Activated B cell treated with CpG ODN at 0.5 μM for 24 hours (primary cell): ENCODE measurements at regions of chr20 and their contacts with region 1.

Region 1: DNA sequence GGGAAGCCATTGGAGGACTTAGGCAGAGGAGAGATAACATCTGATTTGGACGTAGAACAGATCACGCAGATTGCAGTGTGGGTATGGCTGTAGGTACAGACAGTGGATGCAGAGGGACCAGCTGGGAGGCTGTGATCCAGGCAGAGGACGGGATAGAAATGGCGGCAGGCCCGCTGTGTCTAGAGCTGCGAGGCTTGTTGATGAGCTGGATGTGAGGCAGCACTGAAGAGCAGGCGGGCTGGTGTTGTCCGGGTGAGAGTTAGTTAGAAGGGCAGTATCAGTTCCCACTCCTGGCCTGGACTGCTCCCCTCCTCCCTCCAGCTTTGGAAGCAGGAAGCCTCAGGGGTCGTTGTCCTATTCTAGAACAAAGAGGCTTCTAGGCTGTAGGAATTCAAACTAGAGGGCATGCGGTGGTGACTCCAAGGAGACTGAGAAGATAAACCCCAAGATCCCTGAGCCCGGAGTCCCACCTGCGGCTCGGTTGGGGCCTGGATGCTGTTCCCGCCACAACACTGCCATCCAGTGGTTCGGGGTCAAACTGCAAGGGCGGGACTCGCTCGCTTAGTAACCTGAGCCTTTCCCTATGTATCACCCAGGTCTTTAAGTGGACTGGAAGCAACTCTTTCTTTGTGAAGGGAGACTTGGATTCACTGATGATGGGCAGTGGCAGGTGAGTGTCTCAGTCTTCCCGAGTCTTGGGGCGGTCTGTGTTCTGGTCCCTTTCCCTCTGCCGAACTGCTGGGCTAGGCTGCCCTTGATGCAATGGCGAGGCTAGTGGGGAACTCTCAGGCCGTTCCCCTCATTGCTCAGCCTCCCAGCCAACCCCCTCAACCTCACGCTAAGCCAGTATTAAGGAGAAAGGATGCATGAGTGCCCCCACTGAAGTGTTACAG is 11.2 kb downstream of the TLDC2 start:
- DNase-seq: peak; percentile 77
- ATAC-seq: peak; percentile 99
- H3K4me3 Mint-ChIP-seq: peak overlapping the region; percentile 59
- H3K27ac Mint-ChIP-seq: no peak overlapping the region
- H3K4me1 Mint-ChIP-seq: peaks cover 7% of the 10 kb centered on the region
- H3K27me3 Mint-ChIP-seq: no peaks in the 10 kb centered on the region
- CTCF ChIP-seq: no peak

Region 2: DNA sequence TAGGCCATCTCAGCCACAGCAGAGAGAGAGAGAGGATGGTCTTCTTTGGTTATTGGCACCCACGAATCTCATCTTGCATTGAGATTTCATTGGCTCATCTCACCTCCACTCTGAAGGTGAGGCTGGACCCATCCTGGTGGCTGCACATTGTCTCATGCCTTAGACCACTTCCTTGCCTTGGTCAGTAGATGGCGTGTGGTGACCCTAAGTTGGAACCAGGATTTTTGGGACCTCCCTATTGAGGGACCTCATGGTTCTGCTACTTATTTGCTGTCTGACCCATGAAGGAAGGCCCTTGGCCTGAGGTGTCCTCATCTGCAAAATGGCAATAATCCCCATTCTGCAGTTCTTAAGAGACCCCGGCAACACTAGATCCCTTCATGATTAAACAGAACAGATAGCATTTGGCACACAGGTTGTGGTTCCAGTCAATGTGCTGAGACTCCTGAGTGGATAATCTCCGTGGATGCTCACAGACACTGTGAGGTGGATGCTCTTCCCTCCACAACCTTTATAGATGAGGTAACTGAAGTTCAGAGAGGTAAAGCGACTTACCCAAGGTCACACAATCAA is 672.3 kb before region 1 on chr20:
- CTCF ChIA-PET with region 1: interaction called, 6 read pairs
- POLR2A ChIA-PET with region 1: no interaction called
- intact Hi-C with region 1: loop called (anchors 1 kb)
- DNase-seq: no peak
- ATAC-seq: peak; percentile 49
- H3K4me3 Mint-ChIP-seq: no peak overlapping the region
- H3K27ac Mint-ChIP-seq: no peak overlapping the region
- H3K4me1 Mint-ChIP-seq: no peaks in the 10 kb centered on the region
- H3K27me3 Mint-ChIP-seq: peaks cover 2% of the 10 kb centered on the region
- CTCF ChIP-seq: peak; percentile 34

Region 3: DNA sequence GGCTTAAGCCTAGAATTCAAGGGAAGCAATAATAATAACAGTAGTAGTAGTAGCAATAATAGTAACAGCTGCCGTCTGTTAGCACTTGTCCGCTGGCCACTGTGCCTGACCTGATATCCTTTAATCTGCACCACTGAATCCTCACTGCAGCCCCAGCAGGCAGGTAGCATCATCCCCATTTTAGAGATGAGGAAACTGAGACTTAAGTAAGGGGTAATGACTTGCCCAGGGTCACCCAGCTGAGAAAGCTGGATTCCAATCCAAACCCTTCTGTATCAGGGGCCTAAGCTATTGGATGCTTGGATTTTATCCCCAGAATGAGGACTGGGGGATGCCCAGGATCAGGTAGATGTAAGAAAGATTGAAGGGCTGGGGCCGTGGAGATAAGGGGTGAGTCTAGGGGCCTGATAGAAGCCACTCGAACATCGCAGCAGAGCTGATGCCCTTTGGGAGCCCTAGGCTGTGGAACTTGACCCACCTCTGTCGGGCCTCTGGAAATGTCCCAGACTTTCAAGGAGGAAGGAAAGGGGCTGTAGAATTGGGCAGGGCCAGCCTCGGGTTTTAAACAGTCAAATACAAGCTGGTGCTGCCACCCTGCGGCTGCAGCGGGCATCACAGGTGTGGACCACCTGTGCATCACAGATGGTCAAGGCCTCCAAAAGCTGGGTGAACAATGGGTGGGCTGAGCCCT is 447.9 kb before region 1 on chr20:
- CTCF ChIA-PET with region 1: no interaction called
- POLR2A ChIA-PET with region 1: no interaction called
- intact Hi-C with region 1: no loop called
- DNase-seq: peak; percentile 58
- ATAC-seq: peak; percentile 48
- H3K4me3 Mint-ChIP-seq: no peak overlapping the region
- H3K27ac Mint-ChIP-seq: no peak overlapping the region
- H3K4me1 Mint-ChIP-seq: peaks cover 10% of the 10 kb centered on the region
- H3K27me3 Mint-ChIP-seq: peaks cover 4% of the 10 kb centered on the region
- CTCF ChIP-seq: no peak

Region 4: GRCh38 chr20:36506253-36506652 is 380.9 kb before region 1 on chr20:
- CTCF ChIA-PET with region 1: no interaction called
- POLR2A ChIA-PET with region 1: no interaction called
- intact Hi-C with region 1: loop called (anchors 1 kb)
- DNase-seq: no peak
- ATAC-seq: peak; percentile 56
- H3K4me3 Mint-ChIP-seq: no peak overlapping the region
- H3K27ac Mint-ChIP-seq: no peak overlapping the region
- H3K4me1 Mint-ChIP-seq: peaks cover 3% of the 10 kb centered on the region
- H3K27me3 Mint-ChIP-seq: no peaks in the 10 kb centered on the region
- CTCF ChIP-seq: no peak

Region 5: GRCh38 chr20:36613974-36614373 is 273.1 kb before region 1 on chr20:
- CTCF ChIA-PET with region 1: interaction called, 5 read pairs
- POLR2A ChIA-PET with region 1: interaction called, 4 read pairs
- intact Hi-C with region 1: loop called (anchors 1 kb)
- DNase-seq: no peak
- ATAC-seq: no peak
- H3K4me3 Mint-ChIP-seq: no peak overlapping the region
- H3K27ac Mint-ChIP-seq: no peak overlapping the region
- H3K4me1 Mint-ChIP-seq: no peaks in the 10 kb centered on the region
- H3K27me3 Mint-ChIP-seq: no peaks in the 10 kb centered on the region
- CTCF ChIP-seq: no peak

Region 6: GRCh38 chr20:36717657-36718056 is 169.4 kb before region 1 on chr20:
- CTCF ChIA-PET with region 1: interaction called, 5 read pairs
- POLR2A ChIA-PET with region 1: no interaction called
- intact Hi-C with region 1: loop called (anchors 2 kb)
- DNase-seq: no peak
- ATAC-seq: no peak
- H3K4me3 Mint-ChIP-seq: no peak overlapping the region
- H3K27ac Mint-ChIP-seq: no peak overlapping the region
- H3K4me1 Mint-ChIP-seq: no peaks in the 10 kb centered on the region
- H3K27me3 Mint-ChIP-seq: no peaks in the 10 kb centered on the region
- CTCF ChIP-seq: no peak

Region 7: DNA sequence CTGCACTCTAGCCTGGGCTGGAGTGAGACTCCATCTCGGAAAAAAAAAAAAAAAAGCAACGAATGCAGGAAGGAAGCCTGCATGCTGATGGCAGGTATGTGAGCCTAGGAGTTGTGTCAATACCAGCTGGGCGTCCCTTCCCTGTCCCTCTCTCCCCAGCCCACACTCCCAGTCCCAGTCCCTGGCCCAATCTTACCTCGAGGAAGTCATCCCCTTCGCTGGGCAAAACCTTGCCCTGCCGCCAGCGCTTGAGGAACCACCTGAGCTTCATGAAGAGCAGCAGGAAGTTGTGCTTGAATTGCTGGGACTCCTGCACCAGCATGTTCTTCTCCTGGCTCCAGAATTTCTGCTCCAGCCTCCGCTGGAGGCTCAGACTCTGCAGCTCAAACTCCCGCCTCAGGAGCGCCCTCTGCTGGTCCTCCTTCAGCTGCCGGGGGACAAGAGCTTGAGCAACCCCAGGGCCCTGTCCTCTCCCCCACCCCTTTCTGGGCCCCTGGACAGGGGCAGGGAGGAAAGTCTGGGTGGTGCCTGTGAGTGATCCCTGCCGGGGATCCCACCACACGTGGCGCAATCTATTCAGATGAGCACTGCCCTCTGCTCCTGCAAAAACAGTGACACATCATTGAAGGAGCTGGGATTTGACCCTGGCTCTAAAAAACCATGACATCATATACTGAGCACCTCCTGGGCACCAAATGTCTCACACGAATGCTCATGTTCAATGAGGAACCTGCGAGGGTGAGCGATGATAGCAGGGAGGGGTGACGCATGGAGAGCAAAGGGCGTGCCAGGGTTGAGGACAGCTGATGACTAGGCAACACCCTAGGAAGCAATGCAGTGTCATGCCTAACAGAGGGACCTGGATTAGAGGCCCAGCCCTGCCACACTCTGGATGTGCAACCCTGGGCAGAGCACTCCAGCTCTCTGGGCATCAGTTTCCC is 78.5 kb before region 1 on chr20:
- CTCF ChIA-PET with region 1: interaction called, 11 read pairs
- POLR2A ChIA-PET with region 1: interaction called, 9 read pairs
- intact Hi-C with region 1: loop called (anchors 2 kb)
- DNase-seq: peak; percentile 62
- ATAC-seq: peak; percentile 71
- H3K4me3 Mint-ChIP-seq: no peak overlapping the region
- H3K27ac Mint-ChIP-seq: peak overlapping the region; percentile 35
- H3K4me1 Mint-ChIP-seq: peaks cover 3% of the 10 kb centered on the region
- H3K27me3 Mint-ChIP-seq: no peaks in the 10 kb centered on the region
- CTCF ChIP-seq: peak; percentile 71

Region 8: GRCh38 chr20:36861875-36862801 is 25.0 kb before region 1 on chr20:
- CTCF ChIA-PET with region 1: interaction called, 9 read pairs
- POLR2A ChIA-PET with region 1: no interaction called
- intact Hi-C with region 1: loop called (anchors 1 kb)
- DNase-seq: no peak
- ATAC-seq: no peak
- H3K4me3 Mint-ChIP-seq: peak overlapping the region; percentile 78
- H3K27ac Mint-ChIP-seq: peak overlapping the region; percentile 35
- H3K4me1 Mint-ChIP-seq: peaks cover 76% of the 10 kb centered on the region
- H3K27me3 Mint-ChIP-seq: no peaks in the 10 kb centered on the region
- CTCF ChIP-seq: no peak